ENCODE measurements at regions of chr1 and their contacts with region 1.

Region 1: DNA sequence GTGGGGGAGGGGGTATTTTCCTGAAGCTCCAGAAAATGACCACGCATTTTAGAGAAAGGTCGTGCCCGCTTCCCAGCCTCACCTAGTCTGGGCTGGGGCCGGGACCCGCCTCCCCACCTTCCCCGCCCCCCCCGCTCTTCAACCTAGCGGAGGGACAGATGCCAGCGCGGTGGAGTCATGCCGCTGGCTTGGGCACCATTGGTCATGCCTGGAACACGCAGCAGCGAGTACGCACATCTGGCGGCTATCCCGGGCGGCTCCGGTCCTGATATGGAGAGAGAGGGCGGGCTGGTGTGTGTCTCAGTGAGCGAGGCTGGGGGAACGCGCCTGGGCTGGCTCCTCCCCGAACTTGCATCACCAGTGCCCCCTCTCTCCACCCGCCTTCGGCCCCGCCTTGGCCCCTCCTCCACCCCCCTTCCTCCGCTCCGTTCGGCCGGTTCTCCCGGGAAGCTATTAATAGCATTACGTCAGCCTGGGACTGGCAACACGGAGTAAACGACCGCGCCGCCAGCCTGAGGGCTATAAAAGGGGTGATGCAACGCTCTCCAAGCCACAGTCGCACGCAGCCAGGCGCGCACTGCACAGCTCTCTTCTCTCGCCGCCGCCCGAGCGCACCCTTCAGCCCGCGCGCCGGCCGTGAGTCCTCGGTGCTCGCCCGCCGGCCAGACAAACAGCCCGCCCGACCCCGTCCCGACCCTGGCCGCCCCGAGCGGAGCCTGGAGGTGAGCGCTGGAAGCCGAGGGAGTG is at the start of gene ATF3:
- DNase-seq: peak; percentile 99 to 100 (median 100)
- ATAC-seq: peak; percentile 95 to 98 (median 97)
- H3K4me3 ChIP-seq: peak within 1 kb of the TSS; percentile 62 to 89 (median 75)
- H3K27ac ChIP-seq: peak within 1 kb of the TSS; percentile 90 to 99 (median 95)
- H3K4me1 ChIP-seq: peaks cover 0 to 64% (median 45%) of the 10 kb centered on the region in 12 donors
- H3K27me3 ChIP-seq: peaks cover 0 to 30% (median 0%) of the 10 kb centered on the region in 9 donors
- CTCF ChIP-seq: no peak
- POLR2A ChIP-seq: peak; percentile 76 to 99
- total RNA-seq, gene ATF3: 4.6 to 49.0 (median 11.0) TPM

Region 2: DNA sequence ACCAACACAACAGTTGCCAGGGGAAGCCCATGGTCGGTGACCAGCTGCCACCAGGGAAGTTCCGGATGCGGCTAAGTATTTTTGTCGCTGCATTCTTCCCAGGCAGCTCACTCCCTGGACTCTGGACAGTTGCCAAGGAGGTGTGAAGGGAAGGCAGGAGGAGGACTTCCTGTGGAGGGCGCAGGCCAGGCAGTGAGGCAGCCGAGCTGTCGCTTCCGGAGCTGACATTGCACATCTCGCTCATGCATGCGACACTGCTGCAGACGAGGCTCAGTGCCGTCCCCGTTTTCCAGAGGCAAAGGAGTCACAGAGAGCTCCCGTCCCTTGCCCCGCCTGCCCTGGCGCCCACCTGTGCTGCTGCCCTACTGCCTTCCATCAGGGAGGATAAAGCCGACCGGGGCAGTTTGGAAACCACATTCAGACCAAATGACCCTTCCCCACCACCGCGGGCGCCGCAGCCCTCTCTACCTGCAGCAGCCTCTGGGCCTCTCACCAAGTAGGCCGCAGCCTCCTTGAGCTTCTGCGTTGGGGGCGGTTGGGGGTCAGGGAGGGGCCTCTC is 94.2 kb before region 1 on chr1:
- intact Hi-C with region 1: loop called in 1 of 10 experiments (anchors 2 kb)
- DNase-seq: peak; percentile 56 to 83 (median 68)
- ATAC-seq: peak in 3 of 4 donors; percentile 33 to 48 (median 37)
- H3K4me3 ChIP-seq: peak overlapping the region in 7 of 12 donors; percentile 14 to 40 (median 24)
- H3K27ac ChIP-seq: no peak overlapping the region
- H3K4me1 ChIP-seq: peaks cover 0 to 27% (median 12%) of the 10 kb centered on the region in 12 donors
- H3K27me3 ChIP-seq: peaks cover 0 to 41% (median 10%) of the 10 kb centered on the region in 9 donors
- CTCF ChIP-seq: peak in 3 of 12 donors; percentile 6 to 27 (median 24)
- POLR2A ChIP-seq: no peak

Region 3: GRCh38 chr1:212558693-212559480 is 49.5 kb before region 1 on chr1:
- intact Hi-C with region 1: loop called in 8 of 10 experiments (anchors 1 to 5 kb)
- DNase-seq: peak; percentile 93 to 96 (median 95)
- ATAC-seq: peak; percentile 92 to 96 (median 94)
- H3K4me3 ChIP-seq: peak overlapping the region; percentile 52 to 84 (median 74)
- H3K27ac ChIP-seq: peak overlapping the region; percentile 79 to 98 (median 94)
- H3K4me1 ChIP-seq: peaks cover 0 to 22% (median 7%) of the 10 kb centered on the region in 12 donors
- H3K27me3 ChIP-seq: no peaks in the 10 kb centered on the region
- CTCF ChIP-seq: no peak
- POLR2A ChIP-seq: peak in 1 of 2 donors; percentile 66

Region 4: GRCh38 chr1:212566522-212567479 is 41.6 kb before region 1 on chr1:
- intact Hi-C with region 1: loop called in 1 of 10 experiments (anchors 5 kb)
- DNase-seq: peak in 3 of 5 donors; percentile 23 to 41 (median 39)
- ATAC-seq: peak; percentile 57 to 88 (median 86)
- H3K4me3 ChIP-seq: peak overlapping the region; percentile 16 to 65 (median 50)
- H3K27ac ChIP-seq: peak overlapping the region in 11 of 12 donors; percentile 31 to 82 (median 74)
- H3K4me1 ChIP-seq: peaks cover 0 to 21% (median 9%) of the 10 kb centered on the region in 12 donors
- H3K27me3 ChIP-seq: no peaks in the 10 kb centered on the region
- CTCF ChIP-seq: no peak
- POLR2A ChIP-seq: no peak

Region 5: DNA sequence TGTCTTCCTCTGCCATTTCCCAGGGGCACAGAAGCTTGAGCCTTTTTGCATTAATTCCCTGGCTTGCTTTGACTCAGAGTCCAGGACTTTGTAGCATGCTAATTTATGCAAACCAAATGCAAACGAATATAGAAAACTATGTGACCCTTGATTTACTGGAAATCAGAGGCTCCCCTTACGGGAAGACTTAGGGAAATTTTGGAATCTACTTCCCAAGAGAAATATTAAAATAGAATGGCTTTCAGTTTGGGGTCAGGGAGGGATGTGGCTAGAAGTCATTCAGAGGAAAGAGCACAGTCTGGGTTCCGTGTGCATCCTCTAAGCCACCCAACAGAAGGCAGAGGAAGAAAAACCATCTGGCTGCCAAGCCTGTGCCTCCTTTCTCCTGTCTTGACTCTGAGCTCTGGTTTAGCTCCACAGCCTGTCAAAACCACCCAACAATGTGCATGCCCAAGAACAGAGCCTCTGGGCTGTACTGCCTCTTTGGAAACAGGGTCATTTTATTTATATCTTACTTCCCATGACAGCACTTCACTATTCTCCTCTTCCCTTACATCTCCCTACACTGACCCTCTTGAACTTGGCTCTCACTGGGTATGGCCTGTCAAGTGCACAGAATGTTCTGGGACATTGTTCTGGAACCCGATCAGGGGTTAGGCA is 30.2 kb after region 1 on chr1:
- intact Hi-C with region 1: loop called in 3 of 10 experiments (anchors 2 kb)
- DNase-seq: peak in 4 of 5 donors; percentile 50 to 70 (median 56)
- ATAC-seq: peak; percentile 81 to 92 (median 88)
- H3K4me3 ChIP-seq: peak overlapping the region in 8 of 12 donors; percentile 25 to 47 (median 38)
- H3K27ac ChIP-seq: peak overlapping the region; percentile 54 to 95 (median 78)
- H3K4me1 ChIP-seq: peaks cover 3 to 60% (median 42%) of the 10 kb centered on the region in 12 donors
- H3K27me3 ChIP-seq: no peaks in the 10 kb centered on the region
- CTCF ChIP-seq: no peak
- POLR2A ChIP-seq: no peak

Region 6: GRCh38 chr1:212650228-212650627 is 41.8 kb after region 1 on chr1:
- intact Hi-C with region 1: no loop called
- DNase-seq: no peak
- ATAC-seq: no peak
- H3K4me3 ChIP-seq: no peak overlapping the region
- H3K27ac ChIP-seq: no peak overlapping the region
- H3K4me1 ChIP-seq: peaks cover 0 to 20% (median 0%) of the 10 kb centered on the region in 12 donors
- H3K27me3 ChIP-seq: no peaks in the 10 kb centered on the region
- CTCF ChIP-seq: no peak
- POLR2A ChIP-seq: no peak

Region 7: DNA sequence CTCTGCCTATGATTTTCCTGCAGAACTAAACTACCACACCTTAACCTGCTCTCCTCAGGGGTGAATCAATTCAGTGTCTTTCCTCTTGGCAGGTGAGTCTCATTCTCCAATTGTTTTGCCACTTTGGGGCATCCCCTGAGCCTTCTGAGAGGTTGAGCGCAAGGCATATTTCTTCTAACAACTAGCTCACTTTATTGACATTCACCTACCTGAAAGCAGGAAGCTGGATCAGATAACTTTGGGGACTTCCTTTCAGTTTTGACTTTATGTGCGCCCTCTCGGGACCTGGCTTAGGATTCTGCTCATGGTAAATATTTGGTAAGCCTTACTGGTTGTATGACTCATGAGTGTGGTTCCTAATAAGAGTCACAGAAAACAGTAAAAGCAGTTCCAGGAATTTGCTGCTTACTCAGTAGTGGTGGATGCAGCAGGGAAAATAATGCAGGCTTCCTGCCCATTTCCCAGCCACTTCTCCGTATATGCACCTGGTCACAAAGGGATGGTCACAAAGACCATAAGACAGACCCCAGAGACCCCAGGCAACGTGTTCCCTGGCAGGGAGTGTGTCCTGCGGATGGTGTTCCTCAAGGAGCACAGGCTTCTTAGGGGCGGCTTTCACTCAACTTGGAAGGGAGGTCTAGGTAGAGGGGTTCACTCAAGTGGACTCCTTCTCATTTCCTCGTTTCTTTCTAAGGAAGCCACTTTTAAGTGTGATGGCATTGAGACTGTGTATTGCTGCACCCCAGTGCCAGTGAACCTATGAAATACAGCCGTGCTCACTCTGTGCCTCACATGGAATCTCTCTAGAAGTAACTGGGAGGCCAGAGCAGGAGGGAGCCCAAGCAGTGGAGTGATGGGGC is 113.2 kb after region 1 on chr1:
- intact Hi-C with region 1: no loop called
- DNase-seq: no peak
- ATAC-seq: no peak
- H3K4me3 ChIP-seq: no peak overlapping the region
- H3K27ac ChIP-seq: peak overlapping the region in 1 of 12 donors; percentile 15
- H3K4me1 ChIP-seq: peaks cover 0 to 19% (median 0%) of the 10 kb centered on the region in 12 donors
- H3K27me3 ChIP-seq: no peaks in the 10 kb centered on the region
- CTCF ChIP-seq: no peak
- POLR2A ChIP-seq: no peak